Activated CD8-positive, alpha-beta memory T cell treated with anti-CD3 and anti-CD28 coated beads, Interleukin-2, amount 10 ng/mL, durations not matched to agents 7 days and 5 days (primary cell): ENCODE measurements at regions of chr14 and their contacts with region 1.

Region 1: DNA sequence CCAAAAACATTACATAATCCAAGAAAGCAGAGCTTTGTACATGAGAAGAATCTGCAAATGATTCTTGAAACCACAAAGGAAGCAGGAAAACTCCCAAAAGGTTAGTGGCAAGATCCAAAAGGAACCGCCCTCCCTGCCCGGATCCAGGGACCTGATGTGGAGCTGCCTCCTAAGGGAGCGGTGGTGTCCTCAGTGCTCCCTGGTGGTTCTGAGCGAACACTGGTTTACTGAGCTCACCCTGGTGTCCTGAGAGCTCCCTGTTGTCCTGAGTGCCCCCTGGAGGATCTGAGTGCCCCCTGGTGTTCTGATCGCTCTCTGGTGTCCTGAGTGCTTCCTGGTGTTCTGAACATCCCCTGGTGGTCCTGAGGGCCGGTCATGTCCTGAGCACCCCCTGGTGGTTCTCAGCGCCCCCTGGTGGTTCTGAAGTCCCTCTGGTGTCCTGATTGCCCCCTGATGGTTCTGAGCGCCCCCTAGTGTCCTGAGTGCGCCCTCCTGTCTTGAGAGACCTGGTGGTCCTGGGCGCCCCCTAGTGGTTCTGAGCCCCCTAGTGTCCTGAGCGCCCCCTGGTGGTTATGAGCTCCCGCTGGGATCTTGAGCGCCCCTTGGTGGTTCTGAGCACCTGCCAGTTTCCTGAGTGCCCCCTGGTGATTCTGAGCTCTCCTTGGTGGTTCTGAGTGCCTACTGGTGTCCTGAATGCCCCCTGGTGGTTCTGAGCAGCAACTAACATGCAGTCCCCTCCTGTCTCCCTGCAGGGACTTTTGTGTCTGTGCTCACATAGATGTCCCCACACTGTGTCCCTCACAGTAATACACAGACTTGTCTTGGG is 891.1 kb downstream of the TMEM121 start:
- DNase-seq: peak; percentile 96
- ATAC-seq: peak; percentile 88
- H3K4me3 Mint-ChIP-seq: no peak overlapping the region
- H3K27ac Mint-ChIP-seq: no peak overlapping the region
- H3K4me1 Mint-ChIP-seq: no peaks in the 10 kb centered on the region
- H3K27me3 Mint-ChIP-seq: peaks cover 14% of the 10 kb centered on the region

Region 2: DNA sequence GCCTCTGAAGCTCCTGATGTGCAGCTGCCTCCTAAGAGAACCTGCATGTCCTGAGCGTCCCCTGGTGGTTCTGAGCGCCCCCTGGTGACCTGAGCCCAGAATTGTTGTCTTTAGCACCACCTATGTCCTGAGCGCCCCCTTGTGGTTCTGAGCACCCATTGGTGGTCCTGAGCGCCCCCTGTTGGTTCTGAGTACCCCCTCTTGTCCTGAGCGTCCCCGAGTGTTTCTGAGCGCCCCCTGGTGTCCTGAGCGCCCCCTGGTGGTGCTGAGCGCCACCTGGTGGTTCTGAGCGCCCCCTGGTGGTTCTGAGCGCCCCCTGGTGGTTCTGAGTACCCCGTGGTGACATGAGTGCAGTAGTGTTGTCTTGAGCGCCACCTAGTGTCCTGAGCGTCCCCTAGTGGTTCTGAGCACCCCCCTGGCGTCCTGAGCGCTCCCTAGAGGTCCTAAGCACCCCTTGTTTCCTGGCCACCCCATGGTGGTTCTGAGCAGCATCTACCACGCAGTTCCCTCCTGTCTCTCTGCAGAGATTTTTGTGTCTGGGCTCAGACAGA is 108.5 kb before region 1 on chr14:
- CTCF ChIA-PET with region 1: interaction called, 17 read pairs
- DNase-seq: peak; percentile 94
- ATAC-seq: peak; percentile 95
- H3K4me3 Mint-ChIP-seq: no peak overlapping the region
- H3K27ac Mint-ChIP-seq: no peak overlapping the region
- H3K4me1 Mint-ChIP-seq: no peaks in the 10 kb centered on the region
- H3K27me3 Mint-ChIP-seq: peaks cover 61% of the 10 kb centered on the region

Region 3: GRCh38 chr14:106395456-106396050 is 21.9 kb before region 1 on chr14:
- CTCF ChIA-PET with region 1: interaction called, 46 read pairs
- DNase-seq: peak; percentile 51
- ATAC-seq: peak; percentile 43
- H3K4me3 Mint-ChIP-seq: peak overlapping the region; percentile 9
- H3K27ac Mint-ChIP-seq: peak overlapping the region; percentile 77
- H3K4me1 Mint-ChIP-seq: peaks cover 35% of the 10 kb centered on the region
- H3K27me3 Mint-ChIP-seq: peaks cover 23% of the 10 kb centered on the region

Region 4: GRCh38 chr14:106511006-106511799 is 93.8 kb after region 1 on chr14:
- CTCF ChIA-PET with region 1: interaction called, 81 read pairs
- DNase-seq: peak; percentile 85
- ATAC-seq: peak; percentile 81
- H3K4me3 Mint-ChIP-seq: peak overlapping the region; percentile 1
- H3K27ac Mint-ChIP-seq: peak overlapping the region; percentile 80
- H3K4me1 Mint-ChIP-seq: peaks cover 65% of the 10 kb centered on the region
- H3K27me3 Mint-ChIP-seq: peaks cover 39% of the 10 kb centered on the region

Region 5: DNA sequence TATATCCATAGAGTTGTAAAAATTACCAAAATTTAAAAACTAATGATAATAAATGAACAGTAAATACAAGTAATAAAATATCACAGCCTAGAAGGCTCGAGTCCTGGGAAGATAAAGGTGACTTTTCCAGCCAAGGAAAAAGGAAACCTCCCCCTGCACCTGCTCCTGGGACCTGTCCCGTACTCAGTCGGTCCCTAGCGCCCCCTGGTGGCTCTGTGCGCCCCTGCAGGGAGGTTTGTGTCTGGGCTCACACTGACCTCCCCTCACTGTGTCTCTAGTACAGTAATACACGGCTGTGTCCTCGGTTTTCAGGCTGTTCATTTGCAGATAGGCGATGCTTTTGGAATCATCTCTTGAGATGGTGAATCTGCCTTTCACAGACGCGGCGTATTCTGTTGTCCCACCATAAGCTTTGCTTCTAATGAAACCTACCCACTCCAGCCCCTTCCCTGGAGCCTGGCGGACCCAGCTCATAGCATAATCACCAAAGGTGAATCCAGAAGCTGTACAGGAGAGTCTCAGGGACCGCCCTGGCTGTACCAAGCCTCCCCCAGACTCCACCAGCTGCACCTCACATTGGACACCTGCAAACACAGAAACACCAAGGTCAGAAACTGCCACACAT is 139.3 kb after region 1 on chr14:
- CTCF ChIA-PET with region 1: interaction called, 12 read pairs
- DNase-seq: peak; percentile 83
- ATAC-seq: peak; percentile 47
- H3K4me3 Mint-ChIP-seq: no peak overlapping the region
- H3K27ac Mint-ChIP-seq: no peak overlapping the region
- H3K4me1 Mint-ChIP-seq: no peaks in the 10 kb centered on the region
- H3K27me3 Mint-ChIP-seq: peaks cover 36% of the 10 kb centered on the region